PC-3 (cell line): ENCODE measurements at regions of chr14 and their contacts with region 1.

Region 1: GRCh38 chr14:54338696-54339317 is 58.0 kb upstream of the CDKN3 start:
- DNase-seq: peak; percentile 93
- ATAC-seq: peak; percentile 79
- H3K4me3 ChIP-seq: no peak overlapping the region
- H3K27ac ChIP-seq: no peak overlapping the region
- H3K4me1 ChIP-seq: peaks cover 35% of the 10 kb centered on the region
- H3K27me3 ChIP-seq: no peaks in the 10 kb centered on the region
- CTCF ChIP-seq: peak; percentile 99

Region 2: DNA sequence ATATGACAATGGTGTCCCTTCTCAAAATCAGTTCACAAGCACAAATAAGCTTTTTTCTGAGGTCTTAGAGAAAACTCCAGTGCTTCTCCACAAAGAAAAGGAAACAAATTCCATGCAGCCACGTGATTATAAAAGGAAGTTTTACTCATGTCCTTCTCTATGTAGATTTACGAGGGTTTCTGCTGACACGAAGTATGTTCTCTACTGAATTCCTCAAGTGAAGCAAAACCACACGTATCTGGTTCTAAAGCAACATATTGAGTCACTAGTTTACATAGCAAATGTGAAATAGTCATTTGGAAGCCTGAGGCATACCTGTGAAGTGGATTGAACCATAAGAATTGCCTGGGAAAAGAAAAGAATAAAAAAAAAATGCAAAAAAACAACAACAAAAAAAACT is 414.1 kb before region 1 on chr14:
- CTCF ChIA-PET with region 1: no interaction called
- POLR2A ChIA-PET with region 1: interaction called, 3 read pairs
- intact Hi-C with region 1: loop called (anchors 2 kb)
- DNase-seq: peak; percentile 95
- ATAC-seq: peak; percentile 98
- H3K4me3 ChIP-seq: peak overlapping the region; percentile 10; the same call in 1 of the 2 replicates
- H3K27ac ChIP-seq: peak overlapping the region; percentile 47
- H3K4me1 ChIP-seq: peaks cover 29% of the 10 kb centered on the region
- H3K27me3 ChIP-seq: no peaks in the 10 kb centered on the region
- CTCF ChIP-seq: no peak

Region 3: DNA sequence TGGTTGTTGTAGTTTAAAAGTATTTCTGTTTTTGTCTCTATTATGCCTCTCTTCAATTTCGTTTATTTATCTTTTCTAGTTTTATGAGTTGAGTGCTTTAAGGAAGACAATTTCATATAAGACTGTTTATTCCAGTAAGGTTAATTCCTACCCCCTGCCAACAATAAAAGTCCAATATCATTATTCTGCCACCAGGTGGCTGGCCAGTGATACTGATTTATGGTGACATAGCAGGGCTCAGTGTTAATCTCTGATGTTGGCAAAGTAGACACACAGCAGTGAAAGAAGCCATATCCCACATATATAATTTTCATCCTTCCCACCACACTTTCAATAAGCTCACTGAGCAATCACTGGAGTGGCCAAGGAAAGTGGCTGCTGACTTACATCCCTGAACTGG is 313.1 kb before region 1 on chr14:
- CTCF ChIA-PET with region 1: interaction called, 3 read pairs
- POLR2A ChIA-PET with region 1: no interaction called
- intact Hi-C with region 1: loop called (anchors 1 kb)
- DNase-seq: peak; percentile 94
- ATAC-seq: peak; percentile 96
- H3K4me3 ChIP-seq: no peak overlapping the region
- H3K27ac ChIP-seq: no peak overlapping the region
- H3K4me1 ChIP-seq: peaks cover 13% of the 10 kb centered on the region
- H3K27me3 ChIP-seq: no peaks in the 10 kb centered on the region
- CTCF ChIP-seq: peak; percentile 97

Region 4: DNA sequence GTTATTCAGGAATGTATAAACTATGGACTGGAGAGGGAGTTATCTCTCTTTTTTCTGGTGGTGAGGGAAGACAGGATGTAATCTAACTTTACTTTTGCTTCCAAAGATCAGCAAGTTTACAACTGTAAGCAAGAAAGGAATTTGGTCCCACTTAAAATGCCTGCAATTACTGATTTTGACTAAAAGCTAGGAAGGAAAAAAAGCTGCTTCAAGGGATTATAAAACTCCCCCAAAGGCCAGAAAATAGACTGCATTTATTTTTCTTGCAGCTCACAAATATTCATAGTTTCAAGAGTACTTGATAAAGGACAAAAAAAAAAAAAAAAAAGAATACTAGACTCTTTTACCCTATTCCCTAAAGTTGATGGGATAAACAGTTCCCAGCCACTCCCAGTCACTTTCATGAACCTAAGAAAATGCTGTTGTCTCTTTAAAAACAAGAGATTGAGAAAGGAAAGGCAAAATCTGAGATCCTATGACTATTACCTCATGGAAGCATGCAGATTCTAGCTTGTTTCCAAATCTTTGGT is 253.5 kb before region 1 on chr14:
- CTCF ChIA-PET with region 1: no interaction called
- POLR2A ChIA-PET with region 1: no interaction called
- intact Hi-C with region 1: loop called (anchors 2 kb)
- DNase-seq: no peak
- ATAC-seq: no peak
- H3K4me3 ChIP-seq: no peak overlapping the region
- H3K27ac ChIP-seq: no peak overlapping the region
- H3K4me1 ChIP-seq: no peaks in the 10 kb centered on the region
- H3K27me3 ChIP-seq: no peaks in the 10 kb centered on the region
- CTCF ChIP-seq: no peak

Region 5: GRCh38 chr14:54427871-54428270 is 89.1 kb after region 1 on chr14:
- CTCF ChIA-PET with region 1: no interaction called
- POLR2A ChIA-PET with region 1: no interaction called
- intact Hi-C with region 1: no loop called
- DNase-seq: no peak
- ATAC-seq: no peak
- H3K4me3 ChIP-seq: no peak overlapping the region
- H3K27ac ChIP-seq: no peak overlapping the region
- H3K4me1 ChIP-seq: no peaks in the 10 kb centered on the region
- H3K27me3 ChIP-seq: no peaks in the 10 kb centered on the region
- CTCF ChIP-seq: no peak